Activated CD4-positive, alpha-beta T cell treated with anti-CD3 and anti-CD28 coated beads, Interleukin-2, amount 10 ng/mL, durations not matched to agents 7 days and 5 days (primary cell): ENCODE measurements at regions of chr2 and their contacts with region 1.

Region 1: GRCh38 chr2:204177977-204178540 is 241.5 kb downstream of the ICOS start:
- DNase-seq: peak; percentile 77
- H3K4me3 Mint-ChIP-seq: no peak overlapping the region
- H3K27ac Mint-ChIP-seq: no peak overlapping the region
- H3K4me1 Mint-ChIP-seq: peaks cover 3% of the 10 kb centered on the region
- H3K27me3 Mint-ChIP-seq: peaks cover 26% of the 10 kb centered on the region

Region 2: GRCh38 chr2:203997980-203998809 is 179.9 kb before region 1 on chr2:
- CTCF ChIA-PET with region 1: no interaction called
- POLR2A ChIA-PET with region 1: no interaction called
- DNase-seq: no peak
- H3K4me3 Mint-ChIP-seq: peak overlapping the region; percentile 28
- H3K27ac Mint-ChIP-seq: peak overlapping the region; percentile 46
- H3K4me1 Mint-ChIP-seq: peaks cover 68% of the 10 kb centered on the region
- H3K27me3 Mint-ChIP-seq: no peaks in the 10 kb centered on the region

Region 3: GRCh38 chr2:204114295-204115145 is 63.5 kb before region 1 on chr2:
- CTCF ChIA-PET with region 1: interaction called, 11 read pairs
- POLR2A ChIA-PET with region 1: no interaction called
- DNase-seq: no peak
- H3K4me3 Mint-ChIP-seq: no peak overlapping the region
- H3K27ac Mint-ChIP-seq: no peak overlapping the region
- H3K4me1 Mint-ChIP-seq: peaks cover 48% of the 10 kb centered on the region
- H3K27me3 Mint-ChIP-seq: peaks cover 4% of the 10 kb centered on the region

Region 4: DNA sequence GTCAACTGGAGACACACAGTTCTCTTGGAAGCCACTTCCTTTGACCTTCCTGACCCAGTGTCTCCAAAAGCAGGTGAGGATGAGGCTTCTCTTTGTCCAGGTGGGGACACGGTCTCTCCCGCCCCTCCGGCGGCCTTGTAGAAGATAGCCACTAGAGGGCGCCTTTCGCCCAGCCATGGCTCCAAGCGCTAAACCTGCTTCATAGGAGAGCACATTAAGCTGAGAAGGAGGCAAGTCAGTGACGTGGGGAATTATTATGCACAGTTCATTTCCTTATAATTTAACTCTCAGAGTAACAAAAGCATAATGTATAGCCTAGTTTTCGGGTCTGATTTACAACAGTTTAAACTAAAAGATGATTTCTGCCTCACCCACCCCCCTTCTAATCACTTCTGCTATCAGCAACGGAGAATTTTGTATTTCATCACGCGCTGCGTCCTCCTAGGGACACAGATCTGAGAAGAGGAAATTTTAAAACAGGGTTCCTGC is 32.8 kb before region 1 on chr2:
- CTCF ChIA-PET with region 1: interaction called, 13 read pairs
- POLR2A ChIA-PET with region 1: no interaction called
- DNase-seq: peak; percentile 82
- H3K4me3 Mint-ChIP-seq: peak overlapping the region; percentile 76
- H3K27ac Mint-ChIP-seq: peak overlapping the region; percentile 79
- H3K4me1 Mint-ChIP-seq: peaks cover 13% of the 10 kb centered on the region
- H3K27me3 Mint-ChIP-seq: peaks cover 19% of the 10 kb centered on the region